ENCODE measurements at regions of chr20 and their contacts with region 1.

Region 1: DNA sequence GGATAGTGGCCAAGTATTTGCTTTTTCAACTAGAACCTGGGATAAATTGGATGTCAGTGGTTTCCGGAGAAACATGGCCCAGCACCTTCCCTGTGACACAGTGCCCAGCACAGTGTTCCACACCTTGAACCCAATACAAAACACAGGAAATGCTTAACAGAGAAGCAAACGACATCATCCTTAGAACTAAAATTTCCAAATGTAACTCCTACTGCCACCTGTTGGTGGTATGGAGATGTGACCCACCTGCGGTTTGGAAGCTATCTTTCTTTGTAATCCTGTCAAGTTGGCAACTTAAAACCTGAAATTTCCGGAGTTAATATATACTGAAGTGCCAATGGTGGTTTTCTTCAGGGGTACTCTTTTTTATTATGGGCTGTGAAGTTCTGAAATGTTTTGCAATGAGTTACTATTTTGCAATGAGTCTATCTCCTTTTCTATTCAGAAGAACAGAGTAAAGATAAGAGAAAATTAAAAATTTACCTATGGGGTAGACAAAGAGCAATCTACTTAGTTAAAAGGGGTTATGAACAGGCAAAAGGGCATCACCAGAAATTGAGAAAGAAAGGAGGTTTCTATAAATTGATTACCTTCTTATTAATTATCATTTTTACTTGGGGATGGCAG is 658.8 kb downstream of the PTPRT start:
- DNase-seq: peak; percentile 25
- ATAC-seq: peak; percentile 46; the same call in 1 of the 2 replicates
- H3K4me3 Mint-ChIP-seq: no peak overlapping the region
- H3K27ac Mint-ChIP-seq: no peak overlapping the region
- H3K4me1 Mint-ChIP-seq: peaks cover 12% of the 10 kb centered on the region; the same call in 1 of the 2 replicates
- H3K27me3 Mint-ChIP-seq: no peaks in the 10 kb centered on the region; the same call in 1 of the 2 replicates
- CTCF ChIP-seq: peak; percentile 34

Region 2: DNA sequence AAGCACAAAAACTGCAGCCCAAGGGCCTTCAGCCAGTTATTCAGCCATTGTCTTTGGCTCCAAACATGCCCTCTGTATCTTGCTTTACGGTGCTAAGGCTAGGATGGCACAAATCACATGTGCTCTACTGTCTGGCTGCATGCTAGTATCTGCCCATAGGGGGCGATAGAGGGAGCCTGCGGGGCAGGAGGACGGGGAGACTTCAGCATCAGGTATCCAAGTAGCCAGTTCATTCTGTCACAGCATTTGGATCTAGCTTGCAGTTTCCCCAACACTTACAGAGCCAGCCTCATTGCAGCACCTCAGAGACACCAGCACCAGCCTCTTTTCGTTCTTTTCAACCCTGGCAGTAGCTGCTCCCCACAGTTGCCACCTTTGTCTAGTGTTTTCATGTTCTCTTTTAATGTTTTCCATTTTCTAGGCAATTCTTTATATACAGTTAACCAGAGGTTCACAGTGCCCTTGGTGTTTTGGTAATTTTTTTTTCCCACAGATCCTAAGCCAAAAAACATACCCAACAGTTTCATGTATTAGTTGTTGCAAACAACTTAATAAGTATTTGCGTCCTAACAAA is 47.1 kb before region 1 on chr20:
- CTCF ChIA-PET with region 1: interaction called, 10 read pairs
- POLR2A ChIA-PET with region 1: no interaction called
- DNase-seq: peak; percentile 91
- ATAC-seq: peak; percentile 99
- H3K4me3 Mint-ChIP-seq: no peak overlapping the region
- H3K27ac Mint-ChIP-seq: no peak overlapping the region
- H3K4me1 Mint-ChIP-seq: peaks cover 7% of the 10 kb centered on the region
- H3K27me3 Mint-ChIP-seq: no peaks in the 10 kb centered on the region
- CTCF ChIP-seq: peak; percentile 80

Measured in WTC11 (cell line).